PC-9 (cell line): ENCODE measurements at regions of chr3 and their contacts with region 1.

Region 1: GRCh38 chr3:12891985-12892839 is 50.8 kb upstream of the RPL32 start:
- DNase-seq: peak in 1 of 2 experiments; percentile 47
- H3K4me3 ChIP-seq: no peak overlapping the region
- H3K27ac ChIP-seq: no peak overlapping the region
- H3K4me1 ChIP-seq: no peaks in the 10 kb centered on the region
- H3K27me3 ChIP-seq: peaks cover 34% of the 10 kb centered on the region; the same call in 1 of the 2 replicates
- CTCF ChIP-seq: peak; percentile 96

Region 2: GRCh38 chr3:11385891-11386290 is 1506.3 kb before region 1 on chr3:
- CTCF ChIA-PET with region 1: no interaction called
- POLR2A ChIA-PET with region 1: no interaction called
- intact Hi-C with region 1: loop called (anchors 10 kb)
- DNase-seq: no peak
- H3K4me3 ChIP-seq: no peak overlapping the region
- H3K27ac ChIP-seq: no peak overlapping the region
- H3K4me1 ChIP-seq: no peaks in the 10 kb centered on the region
- H3K27me3 ChIP-seq: no peaks in the 10 kb centered on the region
- CTCF ChIP-seq: no peak

Region 3: GRCh38 chr3:12706504-12707253 is 185.5 kb before region 1 on chr3:
- CTCF ChIA-PET with region 1: interaction called, 3 read pairs
- POLR2A ChIA-PET with region 1: no interaction called
- intact Hi-C with region 1: loop called (anchors 5 kb)
- DNase-seq: peak; percentile 63 to 71
- H3K4me3 ChIP-seq: no peak overlapping the region
- H3K27ac ChIP-seq: no peak overlapping the region
- H3K4me1 ChIP-seq: peaks cover 17% of the 10 kb centered on the region
- H3K27me3 ChIP-seq: no peaks in the 10 kb centered on the region
- CTCF ChIP-seq: peak; percentile 85

Region 4: DNA sequence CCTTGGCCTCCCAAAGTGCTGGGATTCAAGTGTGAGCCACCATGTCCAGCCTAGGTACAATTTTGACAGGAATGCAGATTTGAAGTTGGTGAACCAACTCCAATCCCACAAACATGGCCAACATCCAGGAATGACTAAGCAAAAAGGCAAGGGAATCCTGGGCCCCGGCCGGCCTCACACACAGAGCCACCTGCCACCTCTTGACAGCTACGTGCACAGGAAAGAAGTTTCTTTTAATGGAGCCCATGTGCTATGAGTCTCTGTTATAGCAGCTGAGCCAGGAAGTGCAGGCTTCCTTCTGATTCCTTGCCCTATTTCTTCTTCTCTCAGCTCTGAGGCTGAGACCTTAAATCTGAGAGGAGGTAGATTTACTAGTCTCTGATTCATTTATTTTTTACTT is 142.0 kb before region 1 on chr3:
- CTCF ChIA-PET with region 1: interaction called, 10 read pairs
- POLR2A ChIA-PET with region 1: no interaction called
- intact Hi-C with region 1: no loop called
- DNase-seq: peak; percentile 65 to 74
- H3K4me3 ChIP-seq: no peak overlapping the region
- H3K27ac ChIP-seq: peak overlapping the region; percentile 93
- H3K4me1 ChIP-seq: peaks cover 58% of the 10 kb centered on the region
- H3K27me3 ChIP-seq: no peaks in the 10 kb centered on the region
- CTCF ChIP-seq: no peak

Region 5: GRCh38 chr3:12841149-12841970 is 50.9 kb before region 1 on chr3 and contains the start of gene RPL32:
- CTCF ChIA-PET with region 1: interaction called, 3 read pairs
- POLR2A ChIA-PET with region 1: no interaction called
- intact Hi-C with region 1: loop called (anchors 2 kb)
- DNase-seq: peak; percentile 77 to 85
- H3K4me3 ChIP-seq: peak within 1 kb of the TSS; percentile 98
- H3K27ac ChIP-seq: peak within 1 kb of the TSS; percentile 93
- H3K4me1 ChIP-seq: peaks cover 33% of the 10 kb centered on the region
- H3K27me3 ChIP-seq: no peaks in the 10 kb centered on the region
- CTCF ChIP-seq: peak; percentile 89
- total RNA-seq, gene RPL32: 1,195 and 1,662 TPM in 2 replicates

Region 6: DNA sequence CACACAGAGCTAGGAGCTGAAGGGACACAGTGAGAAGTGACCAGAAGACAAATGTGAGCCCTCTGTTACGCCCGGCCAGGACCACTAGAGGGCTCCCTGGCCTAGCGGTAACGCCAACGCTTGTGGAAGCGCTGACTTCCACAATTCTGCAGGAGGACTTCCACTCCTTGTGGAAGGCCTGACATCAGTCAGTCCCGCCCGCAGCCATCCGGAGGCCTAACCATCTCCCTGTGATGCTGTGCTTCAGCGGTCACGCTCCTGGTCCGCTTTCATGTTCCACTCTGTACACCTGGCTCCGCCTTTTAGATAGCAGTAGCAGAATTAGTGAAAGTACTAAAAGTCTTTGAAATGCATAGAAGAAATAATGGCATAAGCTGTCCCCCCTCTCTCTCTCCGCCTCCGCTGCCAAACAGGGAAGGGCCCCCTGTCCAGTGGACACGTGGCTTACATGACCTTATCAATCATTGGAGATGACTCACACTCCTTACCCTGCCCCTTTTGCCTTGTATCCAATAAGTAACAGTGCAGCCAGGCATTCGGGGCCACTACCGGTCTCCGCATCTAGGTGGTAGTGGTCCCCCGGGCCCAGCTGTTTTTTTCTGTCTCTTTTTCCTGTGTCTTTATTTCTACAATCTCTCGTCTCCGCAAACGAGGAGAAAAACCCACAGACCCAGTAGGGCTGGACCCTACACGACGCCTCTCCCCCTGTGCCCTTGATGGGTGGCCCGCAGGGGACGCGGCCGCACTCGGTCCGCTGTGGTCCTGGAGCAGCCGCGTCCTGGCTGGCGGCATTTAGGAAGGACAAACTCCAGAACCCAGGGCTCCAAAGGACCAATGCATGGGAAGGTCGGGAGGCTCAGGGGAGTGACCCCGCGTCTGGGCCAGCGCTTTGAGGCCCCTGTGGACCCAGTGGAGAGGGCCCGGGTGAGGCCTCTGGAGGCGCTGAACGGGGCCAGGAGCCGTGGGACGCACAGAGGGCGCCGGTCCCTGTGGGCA is 23.9 kb before region 1 on chr3:
- CTCF ChIA-PET with region 1: interaction called, 5 read pairs
- POLR2A ChIA-PET with region 1: no interaction called
- intact Hi-C with region 1: loop called (anchors 1 kb)
- DNase-seq: peak; percentile 65 to 82
- H3K4me3 ChIP-seq: no peak overlapping the region
- H3K27ac ChIP-seq: no peak overlapping the region
- H3K4me1 ChIP-seq: no peaks in the 10 kb centered on the region
- H3K27me3 ChIP-seq: peaks cover 56% of the 10 kb centered on the region
- CTCF ChIP-seq: peak; percentile 89

Region 7: GRCh38 chr3:12984023-12984823 is 92.0 kb after region 1 on chr3:
- CTCF ChIA-PET with region 1: interaction called, 12 read pairs
- POLR2A ChIA-PET with region 1: no interaction called
- intact Hi-C with region 1: no loop called
- DNase-seq: peak; percentile 42 to 55
- H3K4me3 ChIP-seq: no peak overlapping the region
- H3K27ac ChIP-seq: no peak overlapping the region
- H3K4me1 ChIP-seq: peaks cover 9% of the 10 kb centered on the region
- H3K27me3 ChIP-seq: no peaks in the 10 kb centered on the region
- CTCF ChIP-seq: peak; percentile 78

Region 8: DNA sequence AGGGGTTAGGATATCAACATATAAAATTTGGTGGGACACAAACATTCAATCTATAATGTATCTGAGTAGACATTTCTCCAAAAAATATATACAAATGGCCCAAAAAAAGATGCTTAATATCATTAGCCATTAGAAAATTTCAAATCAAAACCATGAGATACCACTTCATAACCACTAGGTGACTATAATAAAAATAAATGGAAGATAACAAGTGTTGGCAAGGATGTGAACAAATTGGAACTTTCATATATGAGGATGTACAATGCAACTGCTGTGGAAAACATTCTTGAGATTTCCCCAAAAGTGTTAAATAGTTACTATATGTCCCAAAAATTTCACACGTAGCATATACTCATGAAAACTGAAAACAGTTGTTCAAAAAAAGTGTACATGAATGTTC is 1024.2 kb after region 1 on chr3:
- CTCF ChIA-PET with region 1: no interaction called
- POLR2A ChIA-PET with region 1: no interaction called
- intact Hi-C with region 1: no loop called
- DNase-seq: no peak
- H3K4me3 ChIP-seq: no peak overlapping the region
- H3K27ac ChIP-seq: no peak overlapping the region
- H3K4me1 ChIP-seq: no peaks in the 10 kb centered on the region
- H3K27me3 ChIP-seq: peaks cover 18% of the 10 kb centered on the region; the same call in 1 of the 2 replicates
- CTCF ChIP-seq: no peak